ENCODE measurements at regions of chr13 and their contacts with region 1.

Region 1: DNA sequence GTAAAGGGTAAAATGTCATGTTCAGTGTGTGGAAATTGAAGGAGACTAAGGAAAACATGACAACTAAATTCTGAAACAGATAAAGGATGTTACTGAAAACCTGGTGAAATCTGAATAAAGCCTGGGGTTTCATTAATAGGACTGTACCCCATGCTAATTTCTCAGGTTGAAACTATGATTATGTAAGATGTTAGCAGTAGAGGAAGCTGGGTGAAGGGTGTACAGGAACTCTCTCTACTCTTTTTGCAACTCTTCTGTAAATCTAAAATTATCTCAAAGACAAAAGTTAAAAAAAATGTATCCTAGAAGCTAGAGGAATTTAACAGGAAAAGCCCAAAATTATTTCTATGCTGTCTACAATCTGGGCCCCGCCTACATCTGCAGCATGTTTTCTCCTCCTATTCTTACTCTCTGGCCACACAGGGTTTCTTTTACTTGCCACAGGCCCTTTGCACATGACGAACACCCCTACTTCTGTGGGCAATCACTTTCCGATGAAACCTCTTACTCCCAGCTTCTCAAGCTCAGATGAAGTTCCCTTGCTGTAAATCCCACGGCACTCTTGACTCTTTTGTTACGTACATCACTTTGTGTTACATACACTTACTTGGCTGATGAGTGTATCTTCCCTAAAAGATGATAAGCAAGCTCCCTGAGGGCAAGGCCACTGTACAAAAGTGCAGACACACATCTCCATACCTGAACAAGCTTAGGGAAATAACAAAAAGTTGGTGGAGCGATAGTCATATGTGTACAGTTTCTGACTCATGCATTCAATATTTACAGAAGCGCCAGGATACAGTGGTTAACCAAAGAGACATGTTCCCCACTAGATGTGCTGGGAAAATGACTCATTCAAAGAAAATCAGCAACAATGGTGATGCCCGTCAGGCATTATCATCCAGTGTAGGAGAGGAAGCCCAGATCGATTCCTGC is 32.6 kb downstream of the RUBCNL start:
- DNase-seq: peak; percentile 95
- H3K4me3 ChIP-seq: no peak overlapping the region
- H3K27ac ChIP-seq: peak overlapping the region; percentile 61
- H3K4me1 ChIP-seq: peaks cover 8% of the 10 kb centered on the region
- H3K27me3 ChIP-seq: no peaks in the 10 kb centered on the region
- CTCF ChIP-seq: no peak

Region 2: DNA sequence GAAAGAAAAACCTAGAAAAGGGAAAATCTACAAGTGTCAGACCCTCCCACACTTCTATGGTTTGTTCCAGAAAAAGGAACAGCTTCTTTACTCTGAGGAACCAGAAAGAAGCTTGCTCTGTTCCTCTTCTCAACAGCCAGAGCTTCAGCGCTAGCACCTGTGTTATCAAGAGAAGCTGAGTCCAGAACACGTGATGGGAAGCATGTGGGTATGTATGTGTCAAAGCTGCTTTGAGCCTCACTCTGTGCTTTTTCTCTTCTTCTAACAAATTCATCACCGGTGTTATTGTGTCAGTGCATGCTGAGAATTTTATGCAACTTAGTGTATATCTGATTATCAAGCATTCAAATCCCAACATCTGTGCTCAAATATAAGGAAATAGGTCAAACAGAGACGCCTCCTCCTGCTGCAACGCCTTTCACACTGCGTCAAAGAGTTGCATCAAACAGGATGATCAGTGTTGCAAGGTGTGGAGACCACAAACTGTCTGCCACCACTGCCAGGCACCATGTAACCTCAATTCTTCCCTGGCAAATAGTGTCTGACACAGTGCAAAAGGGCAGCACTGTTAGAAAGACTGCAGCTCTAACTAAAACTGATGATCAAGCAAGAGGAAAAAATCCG is 58.8 kb before region 1 on chr13:
- CTCF ChIA-PET with region 1: no interaction called
- dilution Hi-C with region 1: no loop called
- in situ Hi-C with region 1: no loop called
- intact Hi-C with region 1: loop called (anchors 2 kb)
- DNase-seq: peak; percentile 73
- H3K4me3 ChIP-seq: no peak overlapping the region
- H3K27ac ChIP-seq: peak overlapping the region; percentile 88
- H3K4me1 ChIP-seq: peaks cover 26% of the 10 kb centered on the region
- H3K27me3 ChIP-seq: no peaks in the 10 kb centered on the region
- CTCF ChIP-seq: no peak

Region 3: GRCh38 chr13:46321494-46322225 is 32.8 kb before region 1 on chr13:
- CTCF ChIA-PET with region 1: no interaction called
- dilution Hi-C with region 1: no loop called
- in situ Hi-C with region 1: no loop called
- intact Hi-C with region 1: no loop called
- DNase-seq: peak; percentile 34
- H3K4me3 ChIP-seq: no peak overlapping the region
- H3K27ac ChIP-seq: no peak overlapping the region
- H3K4me1 ChIP-seq: peaks cover 9% of the 10 kb centered on the region
- H3K27me3 ChIP-seq: no peaks in the 10 kb centered on the region
- CTCF ChIP-seq: peak; percentile 79 to 85

Region 4: DNA sequence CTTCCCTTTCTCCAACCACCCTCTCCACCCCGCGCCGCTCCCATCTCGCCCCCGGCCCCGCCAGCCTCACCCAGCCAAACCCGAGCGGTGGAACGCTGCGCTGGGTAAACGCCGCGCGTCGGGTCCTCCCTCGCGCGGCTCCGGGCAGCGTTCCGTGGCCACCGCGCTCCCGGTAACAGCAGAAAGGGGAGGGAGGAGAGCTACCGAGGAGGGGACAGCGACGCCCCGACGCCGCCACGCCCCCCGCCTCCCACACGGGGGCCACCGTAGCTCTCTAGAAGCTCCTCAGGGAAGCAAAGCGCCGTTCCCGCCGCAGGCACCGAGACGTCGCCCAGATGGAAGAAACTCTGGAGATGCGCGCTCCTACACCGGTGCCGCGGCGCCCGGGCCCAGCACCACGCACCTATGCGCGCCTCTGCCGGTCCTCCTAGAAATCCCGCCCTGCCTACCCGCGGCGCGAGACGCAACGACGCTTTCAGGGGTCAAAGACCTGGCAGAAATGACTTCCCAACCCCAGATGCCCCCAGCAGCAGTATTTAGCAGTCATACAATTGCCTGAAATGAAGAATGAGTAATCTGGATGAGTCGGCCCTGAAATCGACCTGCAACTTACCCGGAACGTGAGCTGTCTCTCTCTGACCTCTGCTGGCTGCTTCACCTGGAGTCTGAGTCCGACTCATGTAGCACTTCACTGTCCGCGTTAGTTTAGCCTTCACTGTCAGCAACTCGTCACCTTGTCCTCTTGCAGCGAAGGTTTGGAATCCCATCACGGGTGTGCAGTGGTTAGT is 32.8 kb after region 1 on chr13 and contains the start of gene RUBCNL:
- CTCF ChIA-PET with region 1: no interaction called
- dilution Hi-C with region 1: no loop called
- in situ Hi-C with region 1: no loop called
- intact Hi-C with region 1: loop called (anchors 1 kb)
- DNase-seq: peak; percentile 85
- H3K4me3 ChIP-seq: peak within 1 kb of the TSS; percentile 38 to 55 (median 45)
- H3K27ac ChIP-seq: no peak within 1 kb of the TSS
- H3K4me1 ChIP-seq: peaks cover 36% of the 10 kb centered on the region
- H3K27me3 ChIP-seq: no peaks in the 10 kb centered on the region
- CTCF ChIP-seq: peak in 1 of 2 donors; percentile 40
- total RNA-seq, gene RUBCNL: 7.0 to 20.2 TPM

Region 5: DNA sequence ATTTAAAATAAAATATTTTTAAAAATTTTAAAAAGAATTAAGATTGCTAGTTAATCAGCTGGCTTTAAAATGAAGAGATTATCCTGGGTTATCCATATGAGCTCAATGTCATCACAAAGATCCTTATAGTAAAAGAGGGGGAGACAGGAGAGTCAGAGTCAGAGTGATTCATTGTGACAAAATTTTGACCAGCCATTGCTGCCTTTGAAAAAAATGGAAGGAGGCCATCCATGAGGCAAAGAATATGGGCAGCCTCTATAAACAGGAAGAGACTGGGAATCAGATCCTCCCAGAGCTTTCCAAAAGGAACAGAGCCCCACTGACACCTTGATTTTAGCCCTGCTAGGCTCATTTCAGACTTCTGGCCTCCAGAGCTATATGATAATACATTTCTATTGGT is 41.9 kb after region 1 on chr13:
- CTCF ChIA-PET with region 1: no interaction called
- dilution Hi-C with region 1: loop called (anchors 5 kb)
- in situ Hi-C with region 1: no loop called
- intact Hi-C with region 1: no loop called
- DNase-seq: no peak
- H3K4me3 ChIP-seq: no peak overlapping the region
- H3K27ac ChIP-seq: no peak overlapping the region
- H3K4me1 ChIP-seq: no peaks in the 10 kb centered on the region
- H3K27me3 ChIP-seq: no peaks in the 10 kb centered on the region
- CTCF ChIP-seq: no peak